ENCODE measurements at regions of chr12 and their contacts with region 1.

Region 1: DNA sequence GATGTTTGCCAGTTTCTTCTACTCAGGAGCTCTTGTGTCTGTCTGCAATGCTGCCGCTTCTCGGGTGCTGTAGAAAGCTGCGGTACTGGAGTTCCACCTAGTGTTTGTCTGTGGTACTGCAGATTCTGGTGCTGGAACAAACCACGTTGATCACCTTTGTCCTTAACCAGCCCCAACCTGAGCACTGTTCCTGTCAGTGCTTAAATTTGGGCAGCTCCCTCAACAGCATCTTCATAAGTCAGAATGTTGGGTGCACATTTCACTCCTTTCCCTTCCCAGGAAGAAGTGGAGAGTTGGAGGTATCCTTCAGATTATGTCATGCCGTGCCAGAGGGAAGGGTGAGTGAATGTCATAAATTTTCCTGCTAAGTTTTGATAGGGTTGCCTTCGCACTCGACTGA is 48.7 kb upstream of the LALBA start:
- DNase-seq: peak; percentile 41
- ATAC-seq: peak; percentile 98
- H3K4me3 ChIP-seq: no peak overlapping the region
- H3K27ac ChIP-seq: no peak overlapping the region
- H3K4me1 ChIP-seq: no peaks in the 10 kb centered on the region
- H3K27me3 ChIP-seq: no peaks in the 10 kb centered on the region; a peak in 1 of 4 replicates
- CTCF ChIP-seq: peak; percentile 94 to 99 (median 95); a peak in 5 of 6 replicates
- EP300 ChIP-seq: no peak
- POLR2A ChIP-seq: no peak
- RAD21 ChIP-seq: peak; percentile 100

Region 2: DNA sequence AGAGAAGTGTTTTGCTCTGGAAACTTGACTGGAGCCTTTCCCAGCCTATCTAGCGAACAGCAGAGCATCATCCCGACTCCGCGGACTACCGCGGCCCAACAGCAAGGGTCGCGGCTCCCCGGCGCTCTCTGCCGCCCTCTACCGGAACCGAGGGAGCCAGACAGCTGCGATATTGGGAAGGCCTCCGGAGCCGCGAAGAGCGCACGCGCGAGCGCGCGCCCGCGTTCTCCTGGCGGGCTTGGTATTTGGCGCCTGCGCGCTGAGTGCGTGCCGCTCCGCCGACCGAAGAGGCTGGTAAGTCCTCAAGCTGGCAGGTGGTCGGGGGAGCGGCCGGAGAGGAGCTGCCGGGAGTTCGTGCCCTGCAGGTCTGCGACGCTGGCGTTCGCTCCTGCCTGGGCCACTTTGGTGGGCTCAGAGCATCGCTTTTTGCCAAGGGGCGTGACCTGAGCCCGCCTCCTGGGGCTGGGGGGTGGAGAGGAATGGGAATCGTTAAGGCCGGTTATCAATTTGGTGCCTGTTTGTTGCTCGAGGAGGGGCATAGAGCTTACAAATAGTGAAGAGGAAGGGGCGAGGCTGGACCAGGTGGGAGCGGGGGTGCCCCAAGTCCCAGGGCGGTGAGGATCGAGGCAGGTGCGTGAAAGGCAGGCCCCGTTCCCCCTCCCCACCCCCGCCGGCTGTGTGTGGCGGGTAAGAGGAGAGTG is 655.1 kb before region 1 on chr12 and contains the start of gene TMEM106C:
- CTCF ChIA-PET with region 1: interaction called, 10 read pairs
- POLR2A ChIA-PET with region 1: no interaction called
- RAD21 ChIA-PET with region 1: no interaction called
- SMC1A ChIA-PET with region 1: no interaction called
- in situ Hi-C with region 1: no loop called
- intact Hi-C with region 1: no loop called
- DNase-seq: peak; percentile 75
- ATAC-seq: peak; percentile 98
- H3K4me3 ChIP-seq: peak within 1 kb of the TSS; percentile 81
- H3K27ac ChIP-seq: peak within 1 kb of the TSS; percentile 21
- H3K4me1 ChIP-seq: peaks cover 3% of the 10 kb centered on the region
- H3K27me3 ChIP-seq: no peaks in the 10 kb centered on the region; a peak in 2 of 4 replicates
- CTCF ChIP-seq: peak; percentile 98 to 99 (median 99); a peak in 5 of 6 replicates
- EP300 ChIP-seq: no peak
- POLR2A ChIP-seq: peak; percentile 82
- RAD21 ChIP-seq: peak; percentile 68
- polyA plus RNA-seq, gene TMEM106C: 190 to 236 TPM

Region 3: GRCh38 chr12:48189331-48190125 is 429.0 kb before region 1 on chr12:
- CTCF ChIA-PET with region 1: interaction called, 23 read pairs
- POLR2A ChIA-PET with region 1: no interaction called
- RAD21 ChIA-PET with region 1: interaction called, 10 read pairs
- SMC1A ChIA-PET with region 1: interaction called, 8 read pairs
- in situ Hi-C with region 1: no loop called
- intact Hi-C with region 1: loop called (anchors 5 kb)
- DNase-seq: peak; percentile 34
- ATAC-seq: peak; percentile 82
- H3K4me3 ChIP-seq: no peak overlapping the region
- H3K27ac ChIP-seq: no peak overlapping the region
- H3K4me1 ChIP-seq: no peaks in the 10 kb centered on the region; the same call in 1 of the 2 replicates
- H3K27me3 ChIP-seq: peaks cover 4 to 6% of the 10 kb centered on the region in 2 experiments
- CTCF ChIP-seq: peak; percentile 77 to 92 (median 83)
- EP300 ChIP-seq: no peak
- POLR2A ChIP-seq: no peak
- RAD21 ChIP-seq: peak; percentile 84

Region 4: DNA sequence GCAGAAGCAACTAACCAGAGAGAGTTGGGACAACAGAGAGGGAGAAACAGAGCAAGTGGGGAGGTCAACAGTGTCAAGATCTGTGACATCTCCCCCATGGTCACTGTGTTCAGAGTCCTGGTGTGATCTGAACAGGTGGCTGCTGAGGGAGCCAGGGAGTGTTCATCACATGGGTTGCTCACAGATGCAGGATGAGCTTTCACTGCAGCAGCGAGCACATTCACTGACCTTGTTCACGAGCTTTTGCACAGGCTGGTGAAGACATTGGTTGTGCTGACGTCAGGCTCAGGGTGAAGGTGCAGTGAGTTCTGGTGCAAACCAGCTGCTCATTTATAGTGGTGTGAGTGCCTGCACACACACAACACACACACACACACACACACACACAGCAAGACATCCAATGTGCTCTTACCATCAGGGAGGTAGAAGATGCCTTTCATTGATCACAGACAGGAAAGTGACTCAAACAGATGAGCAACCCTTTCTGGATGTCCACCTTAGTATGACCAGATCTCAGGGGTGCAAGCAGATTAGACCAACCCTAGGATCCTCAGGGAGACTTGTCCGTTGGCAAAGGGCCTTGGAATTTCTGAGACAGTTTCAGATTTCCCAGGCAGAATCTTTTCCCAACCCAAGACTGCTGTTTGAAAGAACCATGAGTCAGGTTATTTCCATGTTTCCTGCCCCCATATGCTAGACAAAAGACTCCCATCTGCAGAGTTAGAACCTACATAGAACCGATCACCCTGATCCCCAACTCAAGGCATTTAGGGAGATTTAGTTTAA is 371.2 kb before region 1 on chr12:
- CTCF ChIA-PET with region 1: interaction called, 4 read pairs
- POLR2A ChIA-PET with region 1: no interaction called
- RAD21 ChIA-PET with region 1: interaction called, 3 read pairs
- SMC1A ChIA-PET with region 1: interaction called, 3 read pairs
- in situ Hi-C with region 1: no loop called
- intact Hi-C with region 1: loop called (anchors 10 kb)
- DNase-seq: no peak
- ATAC-seq: no peak
- H3K4me3 ChIP-seq: no peak overlapping the region
- H3K27ac ChIP-seq: no peak overlapping the region
- H3K4me1 ChIP-seq: no peaks in the 10 kb centered on the region
- H3K27me3 ChIP-seq: no peaks in the 10 kb centered on the region; a peak in 1 of 4 replicates
- CTCF ChIP-seq: no peak
- EP300 ChIP-seq: no peak
- POLR2A ChIP-seq: no peak
- RAD21 ChIP-seq: no peak

Region 5: DNA sequence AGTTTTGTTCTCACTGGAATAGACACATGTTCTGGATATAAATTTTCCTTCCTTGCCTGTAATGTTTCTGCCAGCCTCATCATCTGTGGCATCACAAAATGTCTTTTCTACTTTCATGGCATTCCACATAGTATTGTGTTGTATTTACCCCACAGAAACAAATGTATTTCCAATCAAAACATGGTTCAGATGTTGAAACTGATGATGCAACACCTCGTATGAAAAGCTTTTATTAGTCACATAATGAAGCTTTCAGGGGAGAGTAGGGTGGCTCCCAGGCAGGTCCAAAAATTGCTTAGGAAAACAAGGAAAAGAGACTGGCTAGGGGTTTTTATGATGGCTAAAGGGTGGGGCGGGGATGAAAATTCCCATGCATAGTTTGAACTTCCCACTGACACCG is 238.8 kb before region 1 on chr12:
- CTCF ChIA-PET with region 1: interaction called, 31 read pairs
- POLR2A ChIA-PET with region 1: no interaction called
- RAD21 ChIA-PET with region 1: interaction called, 5 read pairs
- SMC1A ChIA-PET with region 1: interaction called, 5 read pairs
- in situ Hi-C with region 1: no loop called
- intact Hi-C with region 1: loop called (anchors 10 kb)
- DNase-seq: no peak
- ATAC-seq: no peak
- H3K4me3 ChIP-seq: no peak overlapping the region
- H3K27ac ChIP-seq: no peak overlapping the region
- H3K4me1 ChIP-seq: no peaks in the 10 kb centered on the region
- H3K27me3 ChIP-seq: no peaks in the 10 kb centered on the region; a peak in 1 of 4 replicates
- CTCF ChIP-seq: no peak
- EP300 ChIP-seq: no peak
- POLR2A ChIP-seq: no peak
- RAD21 ChIP-seq: no peak

Region 6: GRCh38 chr12:48527891-48528675 is 90.5 kb before region 1 on chr12:
- CTCF ChIA-PET with region 1: interaction called, 13 read pairs
- POLR2A ChIA-PET with region 1: no interaction called
- RAD21 ChIA-PET with region 1: interaction called, 5 read pairs
- SMC1A ChIA-PET with region 1: interaction called, 4 read pairs
- in situ Hi-C with region 1: no loop called
- intact Hi-C with region 1: no loop called
- DNase-seq: no peak
- ATAC-seq: no peak
- H3K4me3 ChIP-seq: no peak overlapping the region
- H3K27ac ChIP-seq: no peak overlapping the region
- H3K4me1 ChIP-seq: no peaks in the 10 kb centered on the region
- H3K27me3 ChIP-seq: no peaks in the 10 kb centered on the region
- CTCF ChIP-seq: no peak
- EP300 ChIP-seq: no peak
- POLR2A ChIP-seq: no peak
- RAD21 ChIP-seq: no peak

Region 7: DNA sequence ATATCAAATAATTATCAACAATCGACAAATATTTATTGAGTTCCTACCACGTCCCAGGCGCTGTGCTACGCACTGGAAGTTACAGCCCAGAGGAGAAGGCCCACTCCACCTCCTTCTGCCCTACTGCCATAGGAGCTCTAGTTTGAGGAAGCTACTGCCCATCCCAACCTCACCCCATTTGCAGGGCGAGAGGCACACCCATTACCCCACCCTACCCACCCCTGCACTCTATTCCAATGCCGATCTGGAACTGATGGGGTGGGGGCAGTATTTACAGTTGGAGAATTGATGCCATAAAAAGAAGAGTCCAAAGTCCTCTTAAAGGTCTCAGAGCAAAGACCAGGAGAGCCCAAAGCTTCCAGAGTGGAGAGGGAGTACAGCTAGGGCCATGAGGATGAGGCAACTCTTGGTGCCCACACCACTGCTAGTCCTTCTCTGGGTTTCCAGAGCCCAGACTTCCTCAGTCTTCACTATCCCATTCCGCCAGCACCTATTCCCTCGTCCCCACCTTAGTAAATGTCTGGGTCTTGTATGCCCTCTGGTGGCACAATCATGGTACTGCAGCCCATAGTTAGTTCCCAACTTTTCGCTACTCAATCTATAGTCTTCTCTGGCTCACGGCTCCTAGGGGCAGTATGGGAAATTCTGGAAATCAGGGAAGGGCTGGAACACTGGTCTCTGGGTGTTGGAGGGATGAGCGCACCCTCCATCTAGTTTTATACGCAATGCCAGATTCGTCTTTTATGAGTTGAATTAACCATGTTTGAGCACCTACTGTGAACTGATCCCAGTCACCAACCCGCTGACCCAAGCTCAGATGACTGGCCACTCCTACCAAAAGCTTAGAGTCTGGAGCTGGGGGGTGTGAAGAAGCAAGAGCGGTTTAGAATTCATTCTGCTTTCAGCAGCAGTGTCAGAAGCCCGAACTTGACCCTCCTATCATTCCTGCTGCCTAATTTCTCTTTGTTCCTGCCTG is 177.2 kb after region 1 on chr12:
- CTCF ChIA-PET with region 1: interaction called, 27 read pairs
- POLR2A ChIA-PET with region 1: no interaction called
- RAD21 ChIA-PET with region 1: interaction called, 7 read pairs
- SMC1A ChIA-PET with region 1: interaction called, 7 read pairs
- in situ Hi-C with region 1: no loop called
- intact Hi-C with region 1: no loop called
- DNase-seq: peak; percentile 16
- ATAC-seq: peak; percentile 88
- H3K4me3 ChIP-seq: no peak overlapping the region
- H3K27ac ChIP-seq: no peak overlapping the region
- H3K4me1 ChIP-seq: no peaks in the 10 kb centered on the region
- H3K27me3 ChIP-seq: no peaks in the 10 kb centered on the region; a peak in 1 of 4 replicates
- CTCF ChIP-seq: peak; percentile 93 to 95 (median 95)
- EP300 ChIP-seq: no peak
- POLR2A ChIP-seq: no peak
- RAD21 ChIP-seq: peak; percentile 97

Region 8: DNA sequence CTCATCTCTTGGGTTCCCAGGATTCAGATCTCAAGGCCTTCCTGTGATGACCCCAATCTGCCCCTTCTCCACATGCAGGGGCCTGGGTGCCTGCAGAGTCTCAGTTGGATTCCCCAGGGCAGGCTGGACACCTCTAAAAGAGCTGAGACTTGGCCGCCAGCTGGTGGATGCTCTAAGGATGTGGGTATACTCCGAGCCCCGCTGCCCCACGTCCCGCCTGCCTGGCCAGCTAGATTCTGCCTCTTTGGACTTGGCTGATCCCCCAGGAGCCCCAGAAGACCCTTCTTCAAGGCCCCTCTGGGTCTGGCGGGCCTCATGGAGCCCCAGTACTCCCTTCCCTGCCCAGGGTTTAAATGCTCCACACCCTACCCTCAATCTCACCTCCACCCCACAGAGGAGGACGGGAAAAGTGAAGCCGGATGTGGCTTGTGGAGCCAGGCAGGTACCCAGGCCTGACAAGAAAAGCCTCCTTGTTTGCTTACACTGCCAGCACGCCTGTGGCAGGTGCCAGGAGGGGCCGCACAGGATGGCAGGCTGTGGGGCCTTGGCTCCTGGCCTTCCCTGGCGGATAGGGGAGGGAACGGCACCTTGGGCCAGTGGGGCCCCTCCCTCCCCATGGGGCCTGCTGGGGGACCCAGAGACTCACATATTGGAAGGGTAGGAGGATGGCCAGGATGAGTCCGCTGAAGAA is 1270.1 kb after region 1 on chr12:
- CTCF ChIA-PET with region 1: no interaction called
- POLR2A ChIA-PET with region 1: no interaction called
- RAD21 ChIA-PET with region 1: no interaction called
- SMC1A ChIA-PET with region 1: no interaction called
- in situ Hi-C with region 1: no loop called
- intact Hi-C with region 1: no loop called
- DNase-seq: no peak
- ATAC-seq: no peak; the same call in 1 of the 3 replicates
- H3K4me3 ChIP-seq: no peak overlapping the region
- H3K27ac ChIP-seq: no peak overlapping the region
- H3K4me1 ChIP-seq: no peaks in the 10 kb centered on the region
- H3K27me3 ChIP-seq: peaks cover 0 to 1% of the 10 kb centered on the region in 2 experiments; a peak in 2 of 4 replicates
- CTCF ChIP-seq: no peak
- EP300 ChIP-seq: no peak
- POLR2A ChIP-seq: no peak
- RAD21 ChIP-seq: no peak

Measured in GM12878 (cell line).